Ovary (tissue), 10 donors: ENCODE measurements at regions of chr3 and their contacts with region 1.

Region 1: DNA sequence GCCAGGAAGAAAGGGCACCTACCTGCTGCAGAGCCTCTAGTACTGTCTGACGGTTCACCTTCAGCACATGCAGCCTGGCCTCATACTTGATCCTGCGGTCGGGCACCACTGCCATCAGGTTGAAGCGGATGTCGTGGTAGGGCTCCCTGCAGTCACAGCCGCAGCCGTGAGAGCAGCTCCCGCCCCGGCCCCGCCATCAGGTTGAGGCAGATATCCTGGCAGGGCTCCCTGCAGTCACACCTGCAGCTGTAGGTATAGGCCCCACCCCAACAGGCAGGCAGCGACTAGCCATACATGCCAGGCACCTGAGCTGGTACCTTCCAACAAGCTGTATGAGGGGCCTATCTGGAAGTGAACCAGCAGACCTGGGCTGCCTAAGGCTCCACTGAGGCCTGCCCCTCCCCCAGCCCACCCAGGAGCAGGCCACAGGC is 38.7 kb downstream of the SEMA3G start:
- DNase-seq: peak in 2 of 5 donors; percentile 38 to 41
- H3K4me3 ChIP-seq: no peak overlapping the region
- H3K27ac ChIP-seq: no peak overlapping the region
- H3K4me1 ChIP-seq: peaks cover 3% of the 10 kb centered on the region
- H3K27me3 ChIP-seq: no peaks in the 10 kb centered on the region
- CTCF ChIP-seq: no peak
- EP300 ChIP-seq: no peak
- POLR2A ChIP-seq: no peak

Region 2: DNA sequence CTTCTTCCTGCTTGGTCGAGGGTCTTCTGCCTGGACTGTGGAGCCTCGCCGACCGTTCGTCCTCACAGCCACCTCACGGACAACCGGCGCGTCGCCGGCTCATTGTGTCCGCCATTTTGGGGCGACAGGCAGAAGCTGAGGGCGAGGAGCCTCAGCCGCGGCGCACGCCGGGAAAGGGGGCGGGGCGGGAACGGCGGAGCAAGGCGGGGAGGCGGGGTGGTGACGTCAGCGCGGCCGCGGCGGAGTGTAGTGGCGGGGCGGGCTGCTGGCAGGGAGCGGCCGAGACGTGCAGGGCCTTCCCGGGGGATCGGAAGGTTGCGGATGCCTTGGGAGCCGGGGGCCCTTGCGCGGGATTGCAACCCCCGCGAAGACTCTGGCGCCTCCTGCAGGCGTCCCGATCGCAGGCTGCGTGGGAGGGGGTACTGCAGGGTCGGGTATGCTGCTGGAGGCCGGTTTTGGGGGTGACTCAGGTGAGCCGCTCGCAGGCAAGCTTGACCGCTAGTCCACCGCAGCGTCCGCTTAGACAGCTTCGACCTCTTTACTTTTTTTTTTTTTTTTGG is 127.7 kb before region 1 on chr3 and contains the start of gene WDR82:
- intact Hi-C with region 1: loop called in 1 of 4 experiments (anchors 10 kb)
- DNase-seq: peak; percentile 98 to 99 (median 98)
- H3K4me3 ChIP-seq: peak within 1 kb of the TSS; percentile 51
- H3K27ac ChIP-seq: peak within 1 kb of the TSS; percentile 93
- H3K4me1 ChIP-seq: peaks cover 21% of the 10 kb centered on the region
- H3K27me3 ChIP-seq: no peaks in the 10 kb centered on the region
- CTCF ChIP-seq: peak; percentile 40 to 54 (median 49)
- EP300 ChIP-seq: no peak
- POLR2A ChIP-seq: peak; percentile 83
- total RNA-seq, gene WDR82: 36.4 to 104 (median 95.2) TPM